IMR-90 (cell line): ENCODE measurements at regions of chr3 and their contacts with region 1.

Region 1: GRCh38 chr3:195850857-195851543 is 39.3 kb upstream of the MUC4 start:
- DNase-seq: peak; percentile 89
- ATAC-seq: peak; percentile 99
- H3K4me3 ChIP-seq: no peak overlapping the region
- H3K27ac ChIP-seq: no peak overlapping the region
- H3K4me1 ChIP-seq: 0 out of 2 replicates have a peak, but pooled peaks cover 2% of the 10 kb centered on the region
- H3K27me3 ChIP-seq: peaks cover 8% of the 10 kb centered on the region; the same call in 1 of the 2 replicates
- CTCF ChIP-seq: peak; percentile 100
- POLR2A ChIP-seq: no peak
- RAD21 ChIP-seq: peak; percentile 98

Region 2: DNA sequence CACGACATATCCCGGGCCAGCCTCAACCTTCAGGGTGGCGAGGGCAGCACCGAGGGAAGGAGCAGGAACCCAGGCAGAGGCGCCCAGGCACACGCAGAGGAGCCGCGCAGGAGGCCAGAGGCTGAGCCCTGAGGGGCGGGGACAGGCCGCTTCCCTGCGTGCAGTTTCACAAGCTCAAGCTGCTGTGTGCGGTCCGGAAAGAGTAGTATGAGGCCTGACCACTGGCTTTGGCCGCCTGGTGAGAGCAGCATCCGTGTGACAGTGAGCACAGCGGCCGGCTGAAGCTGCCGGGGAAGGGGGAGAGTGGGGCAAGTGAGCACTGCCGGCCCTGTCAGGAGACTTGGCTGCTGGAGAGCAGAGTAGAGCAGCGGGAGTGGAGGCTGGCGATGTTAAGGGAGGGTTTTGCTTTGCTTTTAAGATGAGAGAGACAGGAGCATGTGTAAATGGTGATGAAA is 351.5 kb after region 1 on chr3:
- CTCF ChIA-PET with region 1: no interaction called
- POLR2A ChIA-PET with region 1: no interaction called
- dilution Hi-C with region 1: no loop called
- in situ Hi-C with region 1: no loop called
- intact Hi-C with region 1: loop called (anchors 5 kb)
- DNase-seq: peak; percentile 32
- ATAC-seq: peak; percentile 68
- H3K4me3 ChIP-seq: no peak overlapping the region
- H3K27ac ChIP-seq: no peak overlapping the region
- H3K4me1 ChIP-seq: peaks cover 3% of the 10 kb centered on the region; the same call in 1 of the 2 replicates
- H3K27me3 ChIP-seq: peaks cover 12% of the 10 kb centered on the region
- CTCF ChIP-seq: no peak
- POLR2A ChIP-seq: no peak
- RAD21 ChIP-seq: no peak